ENCODE measurements at regions of chr17 and their contacts with region 1.

Region 1: DNA sequence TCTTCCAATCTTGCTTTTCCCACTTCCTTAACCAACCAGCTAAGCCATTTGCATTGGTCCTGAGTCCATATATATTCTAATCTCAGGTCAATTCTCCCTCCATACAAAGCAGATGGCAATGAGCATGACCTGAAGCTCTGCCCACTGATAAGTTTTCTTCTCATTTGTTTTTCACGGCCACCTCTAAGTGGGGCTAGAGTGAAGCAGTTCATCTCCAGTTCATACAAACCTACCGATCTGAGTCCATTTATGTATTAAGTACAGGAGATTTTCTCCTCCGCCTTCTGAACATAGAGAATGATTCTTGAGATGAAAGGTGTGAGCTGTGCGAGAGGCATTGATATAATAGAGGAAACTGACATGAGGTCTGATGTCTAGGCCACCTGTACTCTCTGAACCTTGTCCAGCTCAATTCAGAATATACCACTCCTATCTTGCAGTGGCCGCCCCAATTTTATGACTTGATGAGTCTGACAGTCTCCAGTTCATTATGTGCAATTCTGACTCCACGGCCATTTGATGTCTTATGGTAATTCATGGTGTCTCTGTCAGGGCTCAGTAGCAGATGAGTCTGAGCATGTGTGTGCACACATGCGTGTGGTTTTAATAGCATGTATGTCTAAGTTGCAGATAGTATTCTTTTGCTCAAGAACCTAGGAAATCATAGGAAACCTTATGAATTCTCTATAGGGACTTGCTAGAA is 329.8 kb downstream of the PMP22 start:
- DNase-seq: no peak

Region 2: DNA sequence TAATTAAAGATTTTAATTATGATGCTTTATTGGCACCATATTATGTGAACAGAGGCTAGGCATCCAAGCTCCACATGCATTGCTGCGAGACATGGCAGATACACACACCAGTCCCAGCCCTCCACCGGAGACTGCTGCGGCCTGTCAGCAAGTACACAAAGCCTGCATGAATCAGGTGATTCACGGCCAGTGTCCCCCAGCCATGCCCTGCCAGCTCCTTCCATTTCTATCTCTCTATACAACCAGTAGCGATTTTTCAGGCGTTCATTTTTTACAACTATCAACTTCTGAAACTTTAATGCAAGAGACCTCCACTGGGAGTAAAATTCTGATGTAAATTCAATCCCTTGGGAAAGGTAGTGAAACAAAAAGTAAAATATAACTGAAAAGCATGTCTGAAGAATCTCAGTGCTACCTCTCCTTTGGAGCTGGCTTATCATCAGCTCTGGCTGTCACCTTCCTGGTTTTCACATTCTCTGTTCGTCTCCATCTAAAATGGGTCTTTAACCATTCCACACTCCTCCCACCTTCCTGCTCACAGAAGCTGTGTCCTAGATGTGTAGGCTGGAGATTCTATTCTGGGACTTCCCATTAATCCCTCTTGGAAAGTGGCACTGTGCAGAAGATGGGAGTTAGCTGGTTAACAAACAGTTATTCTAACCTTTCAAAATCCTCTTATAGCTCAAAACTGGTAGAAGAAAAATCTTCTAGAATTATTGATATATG is 1365.7 kb before region 1 on chr17:
- intact Hi-C with region 1: loop called in 1 of 2 experiments (anchors 5 kb)
- DNase-seq: no peak

Region 3: DNA sequence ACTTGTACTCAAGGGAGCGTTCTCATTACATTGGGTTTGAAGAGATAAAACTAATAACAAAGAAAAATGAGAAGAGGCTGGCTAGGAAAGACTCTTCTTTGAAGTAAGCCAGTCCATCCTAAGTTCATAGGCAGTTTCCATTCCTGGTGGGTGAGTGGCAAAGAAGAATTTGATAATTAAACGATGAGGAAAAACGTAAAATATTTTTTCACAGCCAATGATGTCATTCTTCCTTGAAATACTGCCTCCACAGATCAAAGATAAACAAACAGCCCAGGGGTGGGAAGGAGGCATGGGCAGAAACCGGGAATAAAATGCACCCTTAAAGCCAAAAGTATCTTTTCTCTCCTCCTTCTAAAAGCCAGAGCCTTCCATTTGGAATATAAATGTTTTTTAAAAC is 16.8 kb before region 1 on chr17:
- intact Hi-C with region 1: no loop called
- DNase-seq: no peak

Region 4: DNA sequence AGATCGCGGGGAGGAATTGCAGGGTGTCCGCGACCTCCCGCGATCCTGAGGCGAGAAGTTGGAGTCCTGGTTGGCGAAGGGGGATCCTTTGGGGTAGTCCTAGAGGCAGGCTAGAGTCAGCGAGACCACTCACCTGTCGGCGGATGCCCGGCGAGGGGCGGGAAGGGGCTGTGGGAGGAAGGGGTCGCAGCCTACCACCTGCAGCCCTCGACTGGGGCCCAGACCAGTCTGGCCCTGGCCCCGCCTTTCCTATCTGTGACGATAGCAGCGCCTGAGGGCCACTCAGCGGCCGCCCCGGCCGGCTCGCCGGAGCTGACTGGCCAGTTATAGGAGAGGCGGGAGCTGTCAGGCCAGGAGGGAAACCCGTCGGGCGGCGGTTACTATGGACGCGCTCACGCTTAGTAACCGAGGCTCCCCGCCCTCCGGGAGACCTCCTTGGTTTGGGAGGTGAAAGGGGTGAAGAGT is 406.1 kb after region 1 on chr17 and contains the start of gene TEKT3:
- intact Hi-C with region 1: no loop called
- DNase-seq: peak; percentile 95
- total RNA-seq, gene TEKT3: 0.38 to 3.9 TPM